ENCODE measurements at regions of chr1 and their contacts with region 1.

Region 1: GRCh38 chr1:64675718-64676345 is 69.0 kb upstream of the RAVER2 start:
- DNase-seq: peak; percentile 24
- CTCF ChIP-seq: peak; percentile 51

Region 2: DNA sequence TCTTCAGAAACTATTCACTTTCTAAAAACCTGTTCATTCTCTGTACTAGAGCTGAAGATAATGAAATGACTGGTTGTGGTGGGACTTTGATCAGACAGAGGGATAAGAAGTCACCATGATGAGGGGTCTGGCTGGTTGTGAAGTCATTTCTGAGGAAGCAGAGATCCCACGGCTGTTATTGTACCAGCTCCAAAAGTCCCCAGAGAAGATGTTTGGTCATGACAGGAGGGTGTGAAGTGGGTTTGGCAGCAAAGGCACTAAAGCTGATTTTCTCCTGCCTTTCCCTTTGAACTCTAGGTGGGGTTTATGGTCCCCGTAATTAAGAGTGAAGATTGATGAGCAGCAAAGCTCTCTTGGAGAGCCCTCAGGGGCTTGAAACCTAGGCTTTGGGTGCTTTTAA is 309.0 kb before region 1 on chr1:
- CTCF ChIA-PET with region 1: no interaction called
- POLR2A ChIA-PET with region 1: no interaction called
- DNase-seq: no peak
- CTCF ChIP-seq: no peak

Region 3: GRCh38 chr1:64539781-64540218 is 136.0 kb before region 1 on chr1:
- CTCF ChIA-PET with region 1: no interaction called
- POLR2A ChIA-PET with region 1: no interaction called
- DNase-seq: no peak
- CTCF ChIP-seq: no peak

Region 4: GRCh38 chr1:64663668-64664067 is 12.2 kb before region 1 on chr1:
- CTCF ChIA-PET with region 1: interaction called, 45 read pairs
- POLR2A ChIA-PET with region 1: no interaction called
- DNase-seq: peak; percentile 10
- CTCF ChIP-seq: no peak

Region 5: GRCh38 chr1:64686828-64687724 is 11.2 kb after region 1 on chr1:
- CTCF ChIA-PET with region 1: interaction called, 17 read pairs
- POLR2A ChIA-PET with region 1: no interaction called
- DNase-seq: peak; percentile 46
- CTCF ChIP-seq: peak; percentile 66

Measured in GM10248 (cell line).